AG04449 (cell line): ENCODE measurements at regions of chr5 and their contacts with region 1.

Region 1: DNA sequence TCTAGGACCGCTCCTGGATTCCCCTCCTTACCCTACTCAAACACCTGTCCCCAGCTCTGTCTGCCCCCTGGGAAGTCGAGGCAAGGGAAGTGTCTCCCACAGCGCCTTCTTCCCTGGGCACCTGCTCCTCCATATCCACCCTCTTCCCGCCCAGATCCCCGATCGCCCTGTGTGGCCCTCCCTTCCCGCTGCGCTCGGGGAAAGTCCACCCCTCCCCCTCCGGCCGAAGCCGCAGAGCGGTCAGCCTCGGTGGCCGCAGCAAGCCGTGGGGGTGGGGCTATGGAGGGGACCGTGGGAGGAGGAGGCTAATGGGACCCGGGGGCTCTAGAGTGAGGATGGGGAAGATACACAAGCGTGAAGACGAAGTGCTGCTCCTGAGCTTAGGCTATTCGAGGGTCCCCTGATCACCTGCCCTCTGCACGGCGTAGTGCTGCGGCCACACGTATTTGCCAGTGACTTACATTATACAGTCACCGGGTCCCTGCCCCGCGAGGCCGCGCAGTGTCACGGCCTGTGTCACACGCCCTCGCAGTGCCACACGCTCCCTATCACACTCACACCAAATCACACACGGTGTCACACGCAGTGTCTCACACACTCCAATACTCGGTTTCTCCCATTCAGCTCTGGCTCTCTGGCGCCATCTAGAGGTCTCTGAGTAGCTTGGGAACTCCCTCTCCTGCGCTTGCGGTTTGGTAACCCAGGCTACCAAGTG is 658 bp upstream of the PCDH1 start:
- DNase-seq: peak; percentile 17
- H3K4me3 ChIP-seq: peak overlapping the region; percentile 19
- CTCF ChIP-seq: peak; percentile 97

Region 2: GRCh38 chr5:141681695-141682641 is 196.9 kb before region 1 on chr5 and contains the start of gene ARAP3:
- CTCF ChIA-PET with region 1: interaction called, 12 read pairs
- POLR2A ChIA-PET with region 1: no interaction called
- DNase-seq: peak; percentile 37
- H3K4me3 ChIP-seq: peak within 1 kb of the TSS; percentile 58
- CTCF ChIP-seq: no peak

Region 3: GRCh38 chr5:141757402-141757801 is 121.5 kb before region 1 on chr5:
- CTCF ChIA-PET with region 1: interaction called, 103 read pairs
- POLR2A ChIA-PET with region 1: no interaction called
- DNase-seq: no peak
- H3K4me3 ChIP-seq: no peak overlapping the region
- CTCF ChIP-seq: peak; percentile 61

Region 4: DNA sequence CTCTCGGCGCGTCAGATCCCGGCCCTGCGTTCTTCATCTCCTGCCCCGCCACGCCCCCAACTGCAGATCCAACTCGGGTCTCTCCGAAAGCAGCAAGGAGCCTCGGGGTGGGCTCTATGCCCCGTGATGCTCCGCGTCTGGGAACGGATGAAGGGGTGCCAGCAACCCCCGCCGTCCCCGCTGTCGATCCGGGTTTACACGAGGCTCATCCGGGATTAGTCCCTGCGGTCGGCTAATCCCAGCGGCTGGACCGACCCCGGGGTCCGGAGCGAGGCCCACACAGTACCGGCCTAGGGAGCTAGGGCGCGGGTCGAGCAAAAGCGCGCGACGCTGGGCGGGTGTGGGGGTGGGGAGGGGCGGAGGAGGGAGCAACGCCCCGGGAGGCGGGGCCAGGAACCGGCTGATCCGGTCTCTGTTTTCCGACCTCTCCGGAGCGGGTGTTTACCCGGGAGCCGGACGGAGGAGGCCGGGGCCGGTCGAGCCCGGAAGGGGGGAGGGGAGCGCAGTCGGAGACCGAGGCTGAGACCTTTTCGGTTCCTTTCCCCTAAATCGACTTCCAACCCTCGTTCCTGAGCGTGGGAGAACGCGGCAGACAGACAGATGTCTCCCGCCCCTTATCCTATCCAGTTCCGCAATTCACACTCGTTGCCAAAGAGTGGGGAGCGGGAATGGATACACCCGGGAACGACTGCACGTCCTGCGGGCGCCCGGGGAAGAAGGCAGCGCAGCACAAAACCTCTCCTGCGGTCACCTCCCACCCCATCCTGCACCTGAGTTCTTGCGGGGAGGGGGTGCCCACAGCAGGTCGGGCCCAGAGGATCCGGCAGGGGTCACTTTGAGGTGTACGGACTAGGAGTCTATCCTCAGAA is 29.3 kb before region 1 on chr5:
- CTCF ChIA-PET with region 1: interaction called, 13 read pairs
- POLR2A ChIA-PET with region 1: interaction called, 3 read pairs
- DNase-seq: no peak
- H3K4me3 ChIP-seq: peak overlapping the region; percentile 74
- CTCF ChIP-seq: no peak

Region 5: GRCh38 chr5:141889282-141889871 is 10.5 kb after region 1 on chr5:
- CTCF ChIA-PET with region 1: interaction called, 55 read pairs
- POLR2A ChIA-PET with region 1: no interaction called
- DNase-seq: no peak
- H3K4me3 ChIP-seq: no peak overlapping the region
- CTCF ChIP-seq: peak; percentile 26

Region 6: GRCh38 chr5:141923448-141924352 is 44.8 kb after region 1 on chr5 and contains the start of gene DELE1:
- CTCF ChIA-PET with region 1: interaction called, 24 read pairs
- POLR2A ChIA-PET with region 1: no interaction called
- DNase-seq: peak; percentile 70
- H3K4me3 ChIP-seq: peak within 1 kb of the TSS; percentile 85
- CTCF ChIP-seq: no peak

Region 7: GRCh38 chr5:141968914-141969608 is 90.2 kb after region 1 on chr5 and contains the start of gene RNF14:
- CTCF ChIA-PET with region 1: interaction called, 115 read pairs
- POLR2A ChIA-PET with region 1: interaction called, 3 read pairs
- DNase-seq: peak; percentile 28
- H3K4me3 ChIP-seq: peak within 1 kb of the TSS; percentile 88
- CTCF ChIP-seq: peak; percentile 88

Region 8: DNA sequence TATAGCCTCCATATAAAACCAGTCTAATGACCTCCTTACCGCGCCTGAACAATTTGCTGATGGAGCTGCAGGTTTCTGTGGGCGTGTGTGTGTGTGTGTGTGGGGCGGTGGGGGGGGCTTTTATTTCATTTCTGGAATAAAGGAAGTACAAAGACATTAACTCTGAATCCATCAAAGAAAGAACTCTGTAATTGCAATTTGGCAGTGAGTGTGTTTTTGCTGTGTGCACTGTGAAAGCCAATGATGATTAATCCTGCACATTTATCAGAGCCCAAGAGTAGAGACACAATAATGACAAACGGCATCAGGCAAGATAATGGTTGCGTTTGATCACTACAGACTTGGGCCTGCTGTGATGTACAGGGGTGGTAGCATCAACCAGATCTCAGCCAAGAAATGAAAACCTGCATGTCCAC is 200.4 kb after region 1 on chr5:
- CTCF ChIA-PET with region 1: no interaction called
- POLR2A ChIA-PET with region 1: no interaction called
- DNase-seq: no peak
- H3K4me3 ChIP-seq: no peak overlapping the region
- CTCF ChIP-seq: no peak